H1 (cell line): ENCODE measurements at regions of chr3 and their contacts with region 1.

Region 1: DNA sequence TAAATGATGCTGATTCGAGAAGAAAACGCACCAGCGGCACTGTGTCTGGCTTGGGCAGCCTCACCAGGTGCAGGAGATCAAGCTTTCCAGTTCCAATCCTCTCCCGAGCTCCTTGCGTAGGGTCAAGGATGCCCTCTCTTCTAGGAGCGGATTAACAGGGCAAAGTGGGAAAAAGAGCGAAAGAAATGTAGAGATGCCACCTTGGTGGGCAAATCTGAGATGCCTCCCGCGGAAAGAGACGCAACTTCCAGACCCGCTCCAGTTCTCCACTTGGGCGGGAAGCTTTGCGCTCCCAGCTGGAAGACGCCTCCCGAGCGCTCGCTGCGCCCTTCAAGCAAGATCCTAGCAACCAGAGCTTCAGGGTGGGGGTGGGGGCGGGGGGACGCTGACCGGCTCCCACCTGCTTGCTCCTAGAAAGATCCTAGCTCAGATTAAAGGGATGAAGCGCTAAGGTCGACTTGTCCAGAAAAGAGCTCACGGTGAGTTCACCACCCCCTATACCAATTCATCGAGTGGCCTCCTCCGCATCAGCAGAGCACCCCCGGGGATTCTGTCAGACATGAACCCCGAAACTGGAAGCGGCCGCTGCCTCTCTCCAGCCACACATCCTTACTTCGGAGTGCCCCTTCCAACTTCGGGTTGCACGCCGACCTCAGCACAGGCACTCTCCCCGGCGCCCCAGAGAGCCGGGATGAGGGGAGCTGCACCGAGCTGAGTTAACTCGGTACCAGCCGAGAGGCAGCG is 769 bp downstream of the TAFA4 start:
- DNase-seq: peak in 1 of 2 experiments; percentile 69
- H3K4me3 ChIP-seq: peak overlapping the region; percentile 56 to 86 (median 64)
- H3K27ac ChIP-seq: no peak overlapping the region
- H3K4me1 ChIP-seq: peaks cover 0 to 4% (median 3%) of the 10 kb centered on the region in 4 experiments; a peak in 2 of 7 replicates
- H3K27me3 ChIP-seq: peaks cover 18 to 25% (median 19%) of the 10 kb centered on the region in 4 experiments; a peak in 6 of 7 replicates
- CTCF ChIP-seq: no peak
- EP300 ChIP-seq: no peak
- POLR2A ChIP-seq: no peak
- RAD21 ChIP-seq: no peak

Region 2: DNA sequence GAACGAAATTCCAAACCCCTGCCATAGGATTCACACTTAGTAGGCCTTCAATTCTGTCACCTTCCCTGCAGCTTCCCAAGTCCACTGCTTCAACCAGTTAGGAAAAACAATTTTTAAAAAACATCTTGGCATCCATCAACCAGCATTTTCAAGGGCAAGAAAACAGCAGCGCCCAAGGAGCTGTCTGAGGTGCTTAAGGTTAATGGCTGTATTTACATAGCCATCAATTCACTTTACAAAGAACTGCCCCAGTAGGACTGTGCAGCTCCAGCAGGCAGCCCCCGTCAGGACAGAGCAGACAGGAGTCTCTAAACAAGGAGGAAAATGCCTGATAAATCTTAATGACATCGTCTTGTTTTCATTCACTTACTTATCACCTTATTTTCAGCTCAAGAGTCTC is 12.6 kb before region 1 on chr3:
- CTCF ChIA-PET with region 1: interaction called, 15 read pairs
- POLR2A ChIA-PET with region 1: interaction called, 5 read pairs
- DNase-seq: peak; percentile 15 to 51
- H3K4me3 ChIP-seq: no peak overlapping the region
- H3K27ac ChIP-seq: no peak overlapping the region
- H3K4me1 ChIP-seq: peaks cover 0 to 5% (median 0%) of the 10 kb centered on the region in 4 experiments; a peak in 1 of 7 replicates
- H3K27me3 ChIP-seq: no peaks in the 10 kb centered on the region
- CTCF ChIP-seq: no peak
- EP300 ChIP-seq: no peak
- POLR2A ChIP-seq: no peak
- RAD21 ChIP-seq: no peak

Region 3: DNA sequence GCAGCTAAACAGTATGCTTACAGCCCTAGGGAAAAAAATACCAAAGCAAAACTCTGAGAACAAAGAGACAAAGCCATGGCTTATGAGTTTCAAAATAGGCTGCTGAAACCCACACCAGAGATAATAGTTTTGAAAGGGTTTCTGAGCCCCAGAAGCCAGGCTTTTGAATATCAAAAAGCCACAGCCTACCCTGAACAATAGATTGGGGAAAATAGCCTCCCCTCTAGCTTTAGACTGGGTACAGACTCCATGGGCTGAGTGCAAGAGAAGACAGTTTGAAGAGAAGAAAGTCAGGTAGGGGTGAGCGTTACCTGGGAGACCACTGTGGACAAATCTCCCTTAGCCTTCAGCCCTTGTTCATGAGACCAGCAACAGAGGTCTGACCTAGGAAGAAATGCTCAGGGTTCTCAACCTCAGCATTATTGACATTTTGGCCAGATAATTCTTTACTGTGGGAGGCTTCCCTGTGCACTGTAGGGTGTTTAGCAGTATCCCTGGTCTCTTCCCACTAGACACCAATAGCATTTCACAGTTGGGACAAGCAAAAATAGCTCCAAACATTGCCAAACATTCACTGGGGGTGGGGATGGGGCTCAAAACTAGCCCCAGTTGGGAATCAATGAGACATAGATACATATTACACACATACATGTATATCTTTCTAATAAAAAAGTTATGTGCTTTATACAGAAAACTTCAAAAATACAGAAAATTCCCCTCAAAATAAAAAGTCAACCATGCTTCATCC is 12.3 kb after region 1 on chr3:
- CTCF ChIA-PET with region 1: interaction called, 27 read pairs
- POLR2A ChIA-PET with region 1: interaction called, 4 read pairs
- DNase-seq: no peak
- H3K4me3 ChIP-seq: no peak overlapping the region
- H3K27ac ChIP-seq: no peak overlapping the region
- H3K4me1 ChIP-seq: peaks cover 0 to 5% (median 0%) of the 10 kb centered on the region in 4 experiments; a peak in 2 of 7 replicates
- H3K27me3 ChIP-seq: no peaks in the 10 kb centered on the region
- CTCF ChIP-seq: no peak
- EP300 ChIP-seq: no peak
- POLR2A ChIP-seq: no peak
- RAD21 ChIP-seq: no peak